ENCODE measurements at regions of chr15 and their contacts with region 1.

Region 1: GRCh38 chr15:45205192-45205591 is 17.4 kb upstream of the SHF start:
- DNase-seq: peak; percentile 16
- ATAC-seq: peak; percentile 45
- H3K4me3 ChIP-seq: no peak overlapping the region
- H3K27ac ChIP-seq: no peak overlapping the region
- H3K4me1 ChIP-seq: no peaks in the 10 kb centered on the region; the same call in none of the 2 replicates
- H3K27me3 ChIP-seq: no peaks in the 10 kb centered on the region
- CTCF ChIP-seq: peak; percentile 90 to 94 (median 92)
- EP300 ChIP-seq: no peak
- POLR2A ChIP-seq: no peak
- RAD21 ChIP-seq: peak; percentile 87

Region 2: GRCh38 chr15:45179221-45179985 is 25.8 kb before region 1 on chr15:
- CTCF ChIA-PET with region 1: interaction called, 80 read pairs
- POLR2A ChIA-PET with region 1: interaction called, 7 read pairs
- RAD21 ChIA-PET with region 1: interaction called, 6 read pairs
- SMC1A ChIA-PET with region 1: interaction called, 14 read pairs
- in situ Hi-C with region 1: no loop called
- intact Hi-C with region 1: no loop called
- DNase-seq: no peak
- ATAC-seq: peak; percentile 52
- H3K4me3 ChIP-seq: no peak overlapping the region
- H3K27ac ChIP-seq: no peak overlapping the region
- H3K4me1 ChIP-seq: no peaks in the 10 kb centered on the region
- H3K27me3 ChIP-seq: no peaks in the 10 kb centered on the region; a peak in 2 of 4 replicates
- CTCF ChIP-seq: peak; percentile 48 to 70 (median 68)
- EP300 ChIP-seq: no peak
- POLR2A ChIP-seq: no peak
- RAD21 ChIP-seq: peak; percentile 31

Region 3: DNA sequence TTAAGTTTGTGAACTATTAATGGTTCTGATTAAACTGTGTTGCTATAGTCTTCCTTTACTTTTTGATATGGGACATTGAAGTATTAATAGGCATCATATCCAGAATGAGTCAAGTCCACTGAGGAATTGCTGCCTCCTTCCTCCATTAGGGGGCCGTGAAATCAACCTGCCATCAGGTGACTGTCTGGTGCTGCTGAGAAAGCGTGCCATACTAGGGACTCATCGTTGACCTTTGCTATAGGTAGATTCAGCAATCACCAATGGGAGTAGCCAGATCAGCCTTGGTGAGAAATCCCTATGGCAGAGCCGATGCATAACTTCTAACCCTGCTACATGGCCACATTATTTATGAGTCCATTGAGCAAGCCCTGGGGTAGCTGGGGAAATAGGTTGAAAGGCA is 16.8 kb after region 1 on chr15:
- CTCF ChIA-PET with region 1: interaction called, 13 read pairs
- POLR2A ChIA-PET with region 1: no interaction called
- RAD21 ChIA-PET with region 1: no interaction called
- SMC1A ChIA-PET with region 1: interaction called, 23 read pairs
- in situ Hi-C with region 1: no loop called
- intact Hi-C with region 1: no loop called
- DNase-seq: no peak
- ATAC-seq: no peak
- H3K4me3 ChIP-seq: no peak overlapping the region
- H3K27ac ChIP-seq: no peak overlapping the region
- H3K4me1 ChIP-seq: no peaks in the 10 kb centered on the region
- H3K27me3 ChIP-seq: peaks cover 0 to 4% of the 10 kb centered on the region in 2 experiments; a peak in 1 of 4 replicates
- CTCF ChIP-seq: no peak
- EP300 ChIP-seq: no peak
- POLR2A ChIP-seq: no peak
- RAD21 ChIP-seq: no peak

Region 4: GRCh38 chr15:45378149-45378912 is 173.1 kb after region 1 on chr15 and contains the start of gene GATM:
- CTCF ChIA-PET with region 1: interaction called, 5 read pairs
- POLR2A ChIA-PET with region 1: interaction called, 4 read pairs
- RAD21 ChIA-PET with region 1: interaction called, 5 read pairs
- SMC1A ChIA-PET with region 1: interaction called, 7 read pairs
- in situ Hi-C with region 1: no loop called
- intact Hi-C with region 1: loop called (anchors 5 kb)
- DNase-seq: peak; percentile 66
- ATAC-seq: peak; percentile 91
- H3K4me3 ChIP-seq: peak within 1 kb of the TSS; percentile 78
- H3K27ac ChIP-seq: peak within 1 kb of the TSS; percentile 64
- H3K4me1 ChIP-seq: no peaks in the 10 kb centered on the region
- H3K27me3 ChIP-seq: no peaks in the 10 kb centered on the region
- CTCF ChIP-seq: peak; percentile 3 to 28 (median 23); a peak in 3 of 6 replicates
- EP300 ChIP-seq: 0 out of 4 replicates have a peak, but pooled peaks of 1 of the 2 experiments have one; percentile 44
- POLR2A ChIP-seq: peak; percentile 94
- RAD21 ChIP-seq: no peak
- polyA plus RNA-seq, gene GATM: 11.7 to 17.6 TPM

Region 5: GRCh38 chr15:45414215-45414885 is 209.2 kb after region 1 on chr15:
- CTCF ChIA-PET with region 1: interaction called, 15 read pairs
- POLR2A ChIA-PET with region 1: no interaction called
- RAD21 ChIA-PET with region 1: no interaction called
- SMC1A ChIA-PET with region 1: interaction called, 5 read pairs
- in situ Hi-C with region 1: no loop called
- intact Hi-C with region 1: no loop called
- DNase-seq: no peak
- ATAC-seq: peak; percentile 74
- H3K4me3 ChIP-seq: no peak overlapping the region
- H3K27ac ChIP-seq: no peak overlapping the region
- H3K4me1 ChIP-seq: no peaks in the 10 kb centered on the region
- H3K27me3 ChIP-seq: no peaks in the 10 kb centered on the region
- CTCF ChIP-seq: no peak
- EP300 ChIP-seq: no peak
- POLR2A ChIP-seq: no peak
- RAD21 ChIP-seq: no peak